ENCODE measurements at regions of chr18 and their contacts with region 1.

Region 1: GRCh38 chr18:58535340-58536201 is 93.3 kb downstream of the ALPK2 start:
- DNase-seq: peak; percentile 99
- ATAC-seq: peak; percentile 42
- H3K4me3 ChIP-seq: peak overlapping the region; percentile 77
- H3K27ac ChIP-seq: peak overlapping the region; percentile 100
- H3K4me1 ChIP-seq: peaks cover 22% of the 10 kb centered on the region
- H3K27me3 ChIP-seq: no peaks in the 10 kb centered on the region
- CTCF ChIP-seq: no peak
- EP300 ChIP-seq: peak; percentile 97 to 98; a peak in 3 of 4 replicates
- POLR2A ChIP-seq: peak; percentile 66
- RAD21 ChIP-seq: no peak

Region 2: DNA sequence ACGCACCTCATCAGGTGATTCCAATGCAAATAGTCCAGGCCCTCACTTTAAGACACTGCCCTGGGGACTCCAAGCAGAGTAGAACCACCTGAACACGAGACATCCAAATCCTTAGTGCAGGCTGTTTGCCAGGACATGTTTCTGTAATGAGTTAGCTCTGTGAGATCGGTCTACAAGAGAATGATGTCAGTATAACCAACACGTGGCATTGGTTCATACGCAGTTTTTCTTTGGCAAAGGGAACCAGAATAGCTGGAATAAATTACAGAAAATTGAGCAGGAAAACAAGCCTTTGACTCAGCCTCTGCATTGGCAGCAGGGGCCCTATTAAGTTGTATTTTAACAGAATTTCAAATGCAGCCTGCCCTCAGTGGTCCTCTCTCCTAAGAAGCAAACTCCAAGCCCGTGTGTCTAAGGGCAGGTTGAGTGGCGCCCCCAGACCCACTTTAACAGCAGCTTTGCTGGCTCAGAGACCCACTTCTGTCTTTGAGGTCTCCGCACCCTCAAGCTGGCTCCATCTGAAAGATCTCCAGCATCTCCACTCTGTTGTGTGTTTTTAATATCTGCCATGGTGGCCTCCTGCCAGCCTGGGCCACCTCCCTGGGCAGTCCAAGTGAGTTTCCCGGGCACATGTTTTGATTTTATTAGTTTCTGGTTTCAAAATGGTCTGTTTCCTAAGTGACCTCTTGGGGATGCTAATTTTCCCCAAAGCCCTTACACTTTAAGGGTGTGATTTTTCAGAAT is 32.1 kb after region 1 on chr18:
- CTCF ChIA-PET with region 1: interaction called, 83 read pairs
- POLR2A ChIA-PET with region 1: interaction called, 53 read pairs
- RAD21 ChIA-PET with region 1: interaction called, 353 read pairs
- SMC1A ChIA-PET with region 1: interaction called, 578 read pairs
- in situ Hi-C with region 1: no loop called
- intact Hi-C with region 1: loop called (anchors 1 kb)
- DNase-seq: no peak
- ATAC-seq: no peak
- H3K4me3 ChIP-seq: no peak overlapping the region
- H3K27ac ChIP-seq: no peak overlapping the region
- H3K4me1 ChIP-seq: peaks cover 28% of the 10 kb centered on the region
- H3K27me3 ChIP-seq: no peaks in the 10 kb centered on the region
- CTCF ChIP-seq: no peak
- EP300 ChIP-seq: no peak
- POLR2A ChIP-seq: no peak
- RAD21 ChIP-seq: no peak

Region 3: GRCh38 chr18:58649966-58650816 is 114.6 kb after region 1 on chr18:
- CTCF ChIA-PET with region 1: interaction called, 15 read pairs
- POLR2A ChIA-PET with region 1: interaction called, 14 read pairs
- RAD21 ChIA-PET with region 1: interaction called, 11 read pairs
- SMC1A ChIA-PET with region 1: interaction called, 682 read pairs
- in situ Hi-C with region 1: loop called (anchors 5 kb)
- intact Hi-C with region 1: loop called (anchors 1 kb)
- DNase-seq: peak; percentile 80
- ATAC-seq: peak; percentile 81
- H3K4me3 ChIP-seq: 0 out of 2 replicates have a peak overlapping the region, but pooled peaks have one; percentile 12
- H3K27ac ChIP-seq: peak overlapping the region; percentile 80
- H3K4me1 ChIP-seq: peaks cover 24% of the 10 kb centered on the region
- H3K27me3 ChIP-seq: no peaks in the 10 kb centered on the region
- CTCF ChIP-seq: no peak
- EP300 ChIP-seq: peak; percentile 37 to 85; a peak in 3 of 4 replicates
- POLR2A ChIP-seq: no peak
- RAD21 ChIP-seq: 0 out of 2 replicates have a peak, but pooled peaks have one; percentile 1

Region 4: DNA sequence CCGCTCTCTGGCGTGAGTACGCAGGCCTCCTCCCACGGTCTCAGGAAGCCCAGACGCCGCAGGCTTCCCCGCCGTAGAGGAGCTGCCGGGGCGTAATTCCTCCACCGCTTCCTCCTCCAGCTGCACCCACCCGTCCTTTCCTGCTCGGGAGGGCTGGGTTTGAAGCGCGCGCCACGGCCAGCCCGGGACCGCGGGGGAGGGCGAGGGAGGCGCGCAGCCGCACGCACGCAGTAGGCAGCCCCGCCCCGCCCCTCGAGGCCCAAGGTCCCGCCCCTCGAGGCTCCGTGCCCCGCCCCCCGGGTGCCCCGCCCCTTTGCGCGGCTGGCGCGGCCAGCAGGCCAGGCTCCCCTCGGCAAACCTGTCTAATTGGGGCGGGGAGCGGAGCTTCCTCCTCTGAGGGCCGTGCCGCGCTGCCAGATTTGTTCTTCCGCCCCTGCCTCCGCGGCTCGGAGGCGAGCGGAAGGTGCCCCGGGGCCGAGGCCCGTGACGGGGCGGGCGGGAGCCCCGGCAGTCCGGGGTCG is 135.6 kb after region 1 on chr18 and contains the start of gene MALT1:
- CTCF ChIA-PET with region 1: interaction called, 32 read pairs
- POLR2A ChIA-PET with region 1: interaction called, 40 read pairs
- RAD21 ChIA-PET with region 1: interaction called, 113 read pairs
- SMC1A ChIA-PET with region 1: interaction called, 682 read pairs
- in situ Hi-C with region 1: no loop called
- intact Hi-C with region 1: loop called (anchors 2 kb)
- DNase-seq: peak; percentile 75
- ATAC-seq: peak; percentile 78
- H3K4me3 ChIP-seq: peak within 1 kb of the TSS; percentile 95
- H3K27ac ChIP-seq: peak within 1 kb of the TSS; percentile 93
- H3K4me1 ChIP-seq: peaks cover 16% of the 10 kb centered on the region; the same call in 1 of the 2 replicates
- H3K27me3 ChIP-seq: no peaks in the 10 kb centered on the region
- CTCF ChIP-seq: no peak
- EP300 ChIP-seq: peak in 1 of 2 experiments; percentile 17; a peak in 1 of 4 replicates
- POLR2A ChIP-seq: peak; percentile 96
- RAD21 ChIP-seq: no peak; the same call in 1 of the 2 replicates
- polyA plus RNA-seq, gene MALT1: 17.6 to 32.5 TPM

Region 5: GRCh38 chr18:58682429-58683069 is 147.0 kb after region 1 on chr18:
- CTCF ChIA-PET with region 1: interaction called, 27 read pairs
- POLR2A ChIA-PET with region 1: interaction called, 3 read pairs
- RAD21 ChIA-PET with region 1: interaction called, 12 read pairs
- SMC1A ChIA-PET with region 1: interaction called, 14 read pairs
- in situ Hi-C with region 1: no loop called
- intact Hi-C with region 1: no loop called
- DNase-seq: no peak
- ATAC-seq: no peak
- H3K4me3 ChIP-seq: no peak overlapping the region
- H3K27ac ChIP-seq: peak overlapping the region; percentile 20; the same call in 1 of the 2 replicates
- H3K4me1 ChIP-seq: peaks cover 4% of the 10 kb centered on the region
- H3K27me3 ChIP-seq: no peaks in the 10 kb centered on the region
- CTCF ChIP-seq: no peak
- EP300 ChIP-seq: no peak
- POLR2A ChIP-seq: no peak
- RAD21 ChIP-seq: no peak